Sigmoid colon (tissue), 7 donors: ENCODE measurements at regions of chr1 and their contacts with region 1.

Region 1: DNA sequence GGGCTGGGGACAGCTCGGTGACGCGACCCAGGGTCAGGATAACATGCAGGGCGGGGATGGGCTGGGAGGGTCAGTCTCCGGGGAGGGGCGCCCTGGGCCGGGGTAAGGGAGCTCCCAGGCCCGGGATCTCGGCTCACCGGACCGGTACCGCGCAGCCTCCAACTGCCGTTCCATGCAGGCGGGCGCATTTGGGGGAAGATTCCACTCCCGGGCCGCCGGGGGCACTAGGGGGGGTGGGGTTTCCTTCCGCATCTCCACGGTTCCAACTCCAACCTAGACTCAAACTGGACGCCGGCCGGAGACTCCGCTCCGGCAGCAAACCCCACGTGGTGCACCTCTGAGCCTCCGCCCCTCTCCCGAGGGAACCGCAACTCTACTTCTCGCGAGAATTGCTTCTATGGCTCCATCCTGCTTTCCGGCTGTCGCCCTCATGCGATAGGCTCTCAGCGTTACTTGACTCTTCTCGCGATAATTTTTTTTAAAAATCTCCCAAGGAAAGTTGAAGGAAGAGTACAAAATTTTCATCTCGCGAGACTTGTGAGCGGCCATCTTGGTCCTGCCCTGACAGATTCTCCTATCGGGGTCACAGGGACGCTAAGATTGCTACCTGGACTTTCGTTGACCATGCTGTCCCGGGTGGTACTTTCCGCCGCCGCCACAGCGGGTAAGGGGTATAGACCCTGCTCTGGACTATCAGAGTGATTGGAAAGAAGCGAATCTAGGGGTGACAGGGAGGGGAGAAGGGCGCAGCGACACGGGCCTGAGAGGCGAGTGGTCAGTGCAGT is at the starts of genes ATP5PB and WDR77:
- DNase-seq: peak; percentile 98
- H3K4me3 ChIP-seq: peak within 1 kb of the TSS; percentile 80 to 95 (median 90)
- H3K27ac ChIP-seq: peak within 1 kb of the TSS; percentile 86 to 90 (median 88)
- H3K4me1 ChIP-seq: peaks cover 0 to 57% (median 51%) of the 10 kb centered on the region in 4 donors
- H3K27me3 ChIP-seq: no peaks in the 10 kb centered on the region
- CTCF ChIP-seq: no peak
- EP300 ChIP-seq: no peak
- POLR2A ChIP-seq: peak; percentile 23 to 66
- total RNA-seq, gene ATP5PB: 157 to 217 (median 196) TPM
- total RNA-seq, gene WDR77: 16.3 to 23.8 (median 20.1) TPM

Region 2: DNA sequence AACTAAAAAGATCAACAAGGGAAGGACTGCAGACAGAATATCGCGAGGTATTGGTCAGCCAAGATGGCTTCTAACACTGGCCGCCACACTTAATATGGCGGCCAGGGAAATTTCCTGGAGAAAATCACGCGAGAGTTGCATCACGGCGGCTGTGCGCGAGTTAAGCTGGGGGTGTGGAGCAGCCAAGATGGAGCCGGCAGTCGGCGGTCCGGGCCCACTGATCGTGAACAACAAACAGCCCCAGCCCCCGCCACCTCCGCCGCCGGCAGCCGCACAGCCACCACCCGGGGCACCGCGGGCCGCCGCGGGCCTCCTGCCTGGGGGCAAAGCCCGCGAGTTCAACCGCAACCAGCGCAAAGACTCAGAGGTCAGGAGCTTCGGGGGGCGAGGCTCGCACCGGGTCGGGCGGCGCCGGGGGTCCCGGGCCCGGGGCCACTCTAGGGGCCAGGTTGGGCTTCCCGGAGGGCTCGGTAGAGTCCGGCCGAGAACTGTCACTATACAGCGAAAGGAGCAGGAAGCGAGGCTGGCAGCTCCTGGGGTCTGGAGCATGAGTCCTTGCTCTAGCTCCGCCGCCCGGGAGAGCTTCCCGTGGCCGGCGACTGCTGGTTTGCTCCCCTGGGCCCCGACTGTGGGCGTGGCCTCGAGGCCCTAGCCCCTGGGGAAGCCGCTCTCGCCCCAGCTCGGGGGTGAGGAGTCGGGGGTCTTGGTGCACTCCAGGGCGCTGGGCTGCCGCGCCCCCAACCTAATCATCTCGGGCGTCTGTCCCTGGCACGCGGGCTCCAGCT is 1414.5 kb before region 1 on chr1 and contains the start of gene STRIP1:
- intact Hi-C with region 1: loop called (anchors 10 kb)
- DNase-seq: peak; percentile 96
- H3K4me3 ChIP-seq: peak within 1 kb of the TSS; percentile 89 to 98 (median 94)
- H3K27ac ChIP-seq: peak within 1 kb of the TSS; percentile 92 to 95 (median 92)
- H3K4me1 ChIP-seq: peaks cover 0 to 34% (median 15%) of the 10 kb centered on the region in 4 donors
- H3K27me3 ChIP-seq: no peaks in the 10 kb centered on the region
- CTCF ChIP-seq: no peak
- EP300 ChIP-seq: no peak
- POLR2A ChIP-seq: no peak
- total RNA-seq, gene STRIP1: 32.8 to 47.8 (median 36.1) TPM

Region 3: DNA sequence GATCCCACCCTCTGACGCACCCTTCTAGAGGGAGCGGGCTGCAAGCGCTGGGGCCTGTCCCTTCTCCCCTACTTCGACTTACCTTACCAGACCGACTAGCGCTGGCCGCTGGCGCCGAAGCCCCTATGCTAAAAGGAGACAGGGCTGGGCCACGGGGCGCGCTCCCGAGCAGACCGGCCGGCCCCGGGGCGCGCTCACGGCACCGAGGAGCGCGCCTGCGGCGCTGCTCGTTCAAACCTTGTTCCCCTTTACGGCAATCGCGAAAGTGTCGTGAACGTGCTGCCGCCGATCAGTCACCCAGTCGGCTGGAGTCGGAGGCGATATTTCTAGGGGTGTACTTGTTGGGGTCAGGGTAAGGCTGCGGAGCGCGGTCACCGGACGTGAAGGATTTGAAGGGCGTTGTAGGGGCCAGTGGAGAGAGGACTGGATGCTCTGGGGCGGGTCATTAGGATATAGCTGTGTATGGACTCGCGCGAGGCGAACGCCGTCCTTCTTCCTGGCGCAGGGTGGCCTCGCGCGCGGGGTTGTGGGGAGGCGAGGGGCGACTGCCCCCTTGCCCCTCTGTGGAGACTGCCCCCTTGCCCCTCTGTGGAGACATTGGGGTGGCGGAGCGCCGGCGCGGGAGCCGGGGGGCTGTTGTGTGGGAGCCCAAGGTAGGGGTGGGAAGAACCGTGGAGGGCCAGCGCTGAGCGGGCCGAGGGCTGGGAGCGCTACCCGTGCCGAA is 309.0 kb before region 1 on chr1 and contains the starts of genes CEPT1 and DRAM2:
- intact Hi-C with region 1: loop called (anchors 5 kb)
- DNase-seq: peak; percentile 95
- H3K4me3 ChIP-seq: peak within 1 kb of the TSS; percentile 81 to 99 (median 89)
- H3K27ac ChIP-seq: peak within 1 kb of the TSS; percentile 90 to 98 (median 94)
- H3K4me1 ChIP-seq: peaks cover 0 to 40% (median 25%) of the 10 kb centered on the region in 4 donors
- H3K27me3 ChIP-seq: no peaks in the 10 kb centered on the region
- CTCF ChIP-seq: no peak
- EP300 ChIP-seq: no peak
- POLR2A ChIP-seq: peak; percentile 27 to 46
- total RNA-seq, gene CEPT1: 23.8 to 41.0 (median 30.6) TPM
- total RNA-seq, gene DRAM2: 47.6 to 69.6 (median 54.5) TPM

Region 4: GRCh38 chr1:111976365-111976764 is 527.3 kb after region 1 on chr1:
- intact Hi-C with region 1: no loop called
- DNase-seq: no peak
- H3K4me3 ChIP-seq: no peak overlapping the region
- H3K27ac ChIP-seq: no peak overlapping the region
- H3K4me1 ChIP-seq: no peaks in the 10 kb centered on the region
- H3K27me3 ChIP-seq: no peaks in the 10 kb centered on the region
- CTCF ChIP-seq: no peak
- EP300 ChIP-seq: no peak
- POLR2A ChIP-seq: no peak

Region 5: DNA sequence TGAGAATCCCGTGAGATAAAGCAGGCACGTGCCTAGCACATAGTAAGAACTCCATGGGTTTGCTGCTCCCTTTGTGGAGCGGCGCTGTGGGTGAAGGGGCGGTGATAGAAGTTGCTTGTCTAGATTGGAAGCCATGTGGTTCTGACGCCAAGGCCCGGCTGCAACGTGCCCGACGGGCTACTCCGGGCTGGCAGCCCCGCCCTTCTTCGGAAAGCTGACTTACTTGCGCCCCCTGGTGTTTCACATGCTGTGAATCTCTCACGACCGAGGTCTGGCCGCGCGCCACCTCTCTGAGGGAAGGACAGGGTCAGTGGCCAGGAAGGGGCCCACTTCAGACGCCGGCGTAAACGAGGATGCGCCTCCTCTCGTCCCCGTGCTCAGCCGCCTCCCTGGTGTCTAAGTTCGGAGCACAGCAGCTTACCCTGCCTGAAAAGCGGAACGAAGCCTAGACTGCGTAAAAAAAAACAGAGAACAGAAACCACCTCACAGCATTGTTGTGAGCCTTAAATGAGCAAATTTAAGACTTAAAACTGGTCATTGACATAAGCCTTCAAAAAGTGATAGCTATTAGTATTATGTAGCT is 1017.1 kb after region 1 on chr1:
- intact Hi-C with region 1: loop called (anchors 10 kb)
- DNase-seq: peak; percentile 98
- H3K4me3 ChIP-seq: peak overlapping the region; percentile 19 to 43 (median 38)
- H3K27ac ChIP-seq: peak overlapping the region; percentile 73 to 81 (median 77)
- H3K4me1 ChIP-seq: peaks cover 0 to 17% (median 13%) of the 10 kb centered on the region in 4 donors
- H3K27me3 ChIP-seq: no peaks in the 10 kb centered on the region
- CTCF ChIP-seq: peak; percentile 76 to 95 (median 88)
- EP300 ChIP-seq: peak in 1 of 4 donors; percentile 2
- POLR2A ChIP-seq: no peak